ENCODE measurements at regions of chr19 and their contacts with region 1.

Region 1: DNA sequence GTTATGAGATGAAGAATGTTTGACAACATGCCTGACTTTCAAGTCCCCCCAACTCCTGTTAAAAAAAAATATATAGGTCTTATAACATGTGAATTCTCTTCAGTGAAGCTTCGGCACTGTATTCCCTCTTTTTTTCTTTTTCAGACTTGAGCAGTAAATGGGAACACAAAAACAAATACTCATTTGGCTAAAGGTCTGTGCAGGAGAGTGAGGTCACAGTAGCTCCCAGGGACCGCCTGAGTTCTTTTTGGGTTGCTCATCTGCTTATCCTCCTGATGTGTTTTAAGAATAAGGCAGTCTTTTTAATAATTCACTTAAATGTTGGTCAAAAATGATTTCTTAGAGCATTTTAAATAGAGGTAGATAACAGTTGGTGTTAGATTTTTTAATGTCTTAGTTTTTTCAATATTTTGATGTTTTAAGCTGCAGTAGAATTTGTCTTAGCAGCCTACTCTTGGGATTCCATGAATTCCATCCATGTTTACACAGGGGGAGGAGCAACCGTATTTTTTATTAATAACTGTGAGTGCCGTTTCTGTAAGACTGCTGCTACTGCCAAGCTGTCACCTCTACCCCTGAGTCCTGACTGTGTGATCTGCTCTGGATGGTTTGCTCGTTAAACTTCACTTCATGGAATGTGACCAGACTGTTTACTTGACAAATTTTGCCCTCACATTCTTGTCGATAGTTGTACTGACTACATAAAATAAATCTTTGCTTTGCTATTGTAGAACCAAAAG is 14.9 kb downstream of the HNRNPM start:
- DNase-seq: peak; percentile 43
- H3K4me3 ChIP-seq: no peak overlapping the region
- H3K27ac ChIP-seq: peak overlapping the region; percentile 29
- H3K4me1 ChIP-seq: peaks cover 32% of the 10 kb centered on the region
- H3K27me3 ChIP-seq: no peaks in the 10 kb centered on the region
- CTCF ChIP-seq: no peak
- POLR2A ChIP-seq: no peak

Region 2: GRCh38 chr19:8505680-8506401 is 46.2 kb after region 1 on chr19:
- CTCF ChIA-PET with region 1: interaction called, 4 read pairs
- POLR2A ChIA-PET with region 1: no interaction called
- dilution Hi-C with region 1: no loop called
- intact Hi-C with region 1: loop called (anchors 5 kb)
- DNase-seq: peak; percentile 68
- H3K4me3 ChIP-seq: peak overlapping the region; percentile 41 to 61 (median 55)
- H3K27ac ChIP-seq: no peak overlapping the region
- H3K4me1 ChIP-seq: peaks cover 8% of the 10 kb centered on the region
- H3K27me3 ChIP-seq: no peaks in the 10 kb centered on the region
- CTCF ChIP-seq: peak; percentile 86 to 92
- POLR2A ChIP-seq: no peak

Measured in endothelial cell of umbilical vein (primary cell).